Endothelial cell of umbilical vein (primary cell): ENCODE measurements at regions of chr9 and their contacts with region 1.

Region 1: DNA sequence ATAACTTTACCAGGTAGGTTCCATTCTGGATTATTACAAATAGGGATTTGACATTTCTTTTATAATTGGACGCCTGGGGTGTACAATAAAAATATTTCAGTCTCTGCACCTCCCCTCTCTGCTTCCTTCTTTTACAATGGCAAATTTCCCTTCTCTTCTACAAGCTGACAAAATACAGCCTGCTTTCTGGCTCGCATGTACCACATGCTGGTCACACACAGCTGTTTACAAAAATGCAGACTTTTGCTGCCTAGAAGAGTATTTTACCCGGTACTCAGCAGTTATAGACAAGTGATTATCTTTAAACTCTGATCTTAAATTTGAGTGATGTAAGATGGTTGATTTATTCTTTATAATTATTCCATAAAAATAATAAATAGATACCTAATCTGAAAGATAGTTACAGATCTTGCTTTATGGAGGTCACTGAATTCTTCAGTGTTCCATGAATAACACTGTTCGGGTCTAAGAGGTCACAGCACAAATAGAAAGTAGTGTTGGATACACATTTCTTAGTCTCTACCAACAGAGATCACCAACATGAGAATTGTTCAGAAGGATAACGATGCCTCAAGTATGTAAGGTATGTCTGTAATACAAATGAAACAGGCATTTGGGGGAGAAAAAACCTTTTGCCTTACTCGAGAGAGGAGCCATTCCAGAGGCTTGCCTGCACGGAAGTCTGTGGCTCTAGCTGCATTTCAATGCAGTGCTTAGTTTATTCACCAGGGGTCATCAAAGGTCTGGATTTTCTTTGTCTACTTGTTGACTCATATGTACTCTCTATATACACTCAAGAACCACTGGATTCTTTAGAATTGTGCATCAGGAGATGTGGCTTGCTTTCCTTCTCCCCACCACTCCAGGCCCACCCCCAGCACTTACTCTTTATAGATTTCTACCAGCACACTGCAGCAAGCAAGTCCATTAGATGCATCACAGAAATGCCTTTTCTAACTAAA is 206.6 kb upstream of the RFX3 start:
- DNase-seq: peak; percentile 88
- H3K4me3 ChIP-seq: no peak overlapping the region
- H3K27ac ChIP-seq: no peak overlapping the region
- H3K4me1 ChIP-seq: no peaks in the 10 kb centered on the region
- H3K27me3 ChIP-seq: peaks cover 0 to 2% of the 10 kb centered on the region in 2 experiments
- CTCF ChIP-seq: peak; percentile 58 to 66
- POLR2A ChIP-seq: no peak

Region 2: DNA sequence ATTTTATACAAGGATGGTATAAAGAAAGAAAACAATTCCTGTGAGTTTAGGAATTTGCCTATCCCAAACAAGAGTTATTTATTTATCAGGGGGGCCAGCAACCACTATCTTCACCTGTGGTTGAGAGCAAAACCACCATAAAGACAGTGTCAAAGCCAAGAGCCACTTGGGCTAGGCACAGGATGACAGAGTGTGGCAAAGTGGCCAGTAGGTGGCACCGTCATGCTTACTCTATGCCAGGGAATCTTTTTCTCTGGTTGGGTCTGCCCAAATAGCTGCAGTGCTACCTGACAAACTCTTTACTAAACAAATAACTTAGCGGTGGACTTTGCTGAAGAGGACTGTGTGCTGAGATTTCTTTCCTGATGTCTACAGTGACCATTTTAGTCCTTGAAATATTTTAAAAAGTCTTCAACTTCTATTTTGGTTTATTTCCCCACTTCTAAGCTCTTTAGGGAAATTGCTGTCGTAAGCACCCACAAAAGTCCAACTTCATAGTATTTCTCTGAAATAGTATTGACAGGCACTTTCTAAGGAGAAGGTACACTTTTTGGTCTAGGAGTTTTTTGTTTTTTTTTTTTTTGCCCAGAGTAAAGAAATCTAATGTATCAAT is 491.6 kb before region 1 on chr9:
- CTCF ChIA-PET with region 1: interaction called, 6 read pairs
- POLR2A ChIA-PET with region 1: no interaction called
- dilution Hi-C with region 1: no loop called
- intact Hi-C with region 1: loop called (anchors 2 kb)
- DNase-seq: peak; percentile 67
- H3K4me3 ChIP-seq: no peak overlapping the region
- H3K27ac ChIP-seq: no peak overlapping the region
- H3K4me1 ChIP-seq: no peaks in the 10 kb centered on the region
- H3K27me3 ChIP-seq: no peaks in the 10 kb centered on the region
- CTCF ChIP-seq: peak; percentile 77 to 88
- POLR2A ChIP-seq: no peak

Region 3: GRCh38 chr9:3992924-3993323 is 260.6 kb after region 1 on chr9:
- CTCF ChIA-PET with region 1: no interaction called
- POLR2A ChIA-PET with region 1: no interaction called
- dilution Hi-C with region 1: no loop called
- intact Hi-C with region 1: loop called (anchors 2 kb)
- DNase-seq: peak; percentile 69
- H3K4me3 ChIP-seq: no peak overlapping the region
- H3K27ac ChIP-seq: no peak overlapping the region
- H3K4me1 ChIP-seq: peaks cover 4% of the 10 kb centered on the region
- H3K27me3 ChIP-seq: no peaks in the 10 kb centered on the region
- CTCF ChIP-seq: no peak
- POLR2A ChIP-seq: no peak

Region 4: DNA sequence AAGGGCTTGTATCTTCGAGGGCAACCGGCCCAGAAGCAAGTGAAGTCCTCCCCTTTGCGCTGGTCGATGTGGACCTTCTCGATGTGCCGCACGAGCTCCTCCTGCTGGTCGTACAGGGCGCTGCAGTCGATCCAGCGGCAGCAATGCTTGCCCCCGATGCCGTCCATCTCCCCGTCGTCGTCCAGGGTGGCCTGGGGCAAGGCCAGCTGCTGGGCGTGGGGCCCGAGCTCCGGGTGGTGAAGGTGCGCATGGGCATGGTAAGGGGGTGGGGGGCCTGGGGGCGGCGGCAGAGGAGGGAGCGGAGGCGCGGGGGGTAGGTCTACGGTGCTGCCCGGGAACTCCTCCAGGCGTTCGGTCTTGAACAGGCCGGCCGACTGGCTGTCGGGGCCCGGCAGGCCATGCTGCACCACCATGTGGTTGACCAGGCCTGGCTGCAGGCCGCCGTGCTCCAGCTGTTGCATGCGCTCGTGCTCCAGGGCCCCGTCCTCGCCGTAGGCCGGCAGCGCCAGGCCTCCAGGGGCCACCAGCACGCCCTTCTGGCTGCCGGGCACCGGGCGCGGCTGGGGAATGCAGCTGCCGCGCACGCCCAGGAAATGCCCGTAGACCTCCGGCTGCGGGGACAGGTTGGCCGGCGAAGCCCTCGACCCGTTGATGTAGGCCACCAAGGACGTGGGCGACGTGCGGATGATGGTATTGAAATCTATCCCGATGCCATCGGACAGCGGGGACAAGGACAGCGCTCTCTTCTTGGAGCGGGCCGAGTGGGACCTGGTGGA is 385.7 kb after region 1 on chr9:
- CTCF ChIA-PET with region 1: interaction called, 10 read pairs
- POLR2A ChIA-PET with region 1: no interaction called
- dilution Hi-C with region 1: no loop called
- intact Hi-C with region 1: loop called (anchors 1 kb)
- DNase-seq: no peak
- H3K4me3 ChIP-seq: no peak overlapping the region
- H3K27ac ChIP-seq: no peak overlapping the region
- H3K4me1 ChIP-seq: no peaks in the 10 kb centered on the region
- H3K27me3 ChIP-seq: no peaks in the 10 kb centered on the region
- CTCF ChIP-seq: peak; percentile 54 to 57
- POLR2A ChIP-seq: no peak

Region 5: DNA sequence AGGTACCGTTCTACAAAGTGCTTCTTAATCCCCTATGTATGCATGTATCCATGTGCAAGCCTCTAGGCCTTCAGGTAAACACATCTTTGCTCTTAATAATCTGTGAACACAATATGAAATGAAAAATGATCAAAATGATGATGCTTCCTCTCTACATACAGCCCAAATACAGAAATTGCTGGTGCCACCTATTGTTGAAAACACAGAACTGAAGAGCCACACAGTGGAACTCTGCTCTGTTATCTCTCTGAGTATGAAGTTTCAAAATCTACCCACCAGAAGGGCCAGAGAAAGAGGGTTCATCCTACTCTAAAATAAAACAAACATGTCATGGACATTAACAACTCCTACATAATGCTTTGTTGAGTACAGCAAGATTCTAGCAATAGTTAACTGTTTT is 496.2 kb after region 1 on chr9:
- CTCF ChIA-PET with region 1: interaction called, 45 read pairs
- POLR2A ChIA-PET with region 1: no interaction called
- dilution Hi-C with region 1: no loop called
- intact Hi-C with region 1: loop called (anchors 1 kb)
- DNase-seq: peak; percentile 25
- H3K4me3 ChIP-seq: no peak overlapping the region
- H3K27ac ChIP-seq: no peak overlapping the region
- H3K4me1 ChIP-seq: no peaks in the 10 kb centered on the region
- H3K27me3 ChIP-seq: peaks cover 0 to 2% of the 10 kb centered on the region in 2 experiments
- CTCF ChIP-seq: peak; percentile 11 to 42
- POLR2A ChIP-seq: no peak

Region 6: GRCh38 chr9:4339357-4339756 is 607.0 kb after region 1 on chr9:
- CTCF ChIA-PET with region 1: interaction called, 24 read pairs
- POLR2A ChIA-PET with region 1: no interaction called
- dilution Hi-C with region 1: no loop called
- intact Hi-C with region 1: loop called (anchors 1 kb)
- DNase-seq: peak; percentile 86
- H3K4me3 ChIP-seq: no peak overlapping the region
- H3K27ac ChIP-seq: no peak overlapping the region
- H3K4me1 ChIP-seq: peaks cover 6% of the 10 kb centered on the region
- H3K27me3 ChIP-seq: no peaks in the 10 kb centered on the region
- CTCF ChIP-seq: peak; percentile 85 to 97
- POLR2A ChIP-seq: no peak

Region 7: DNA sequence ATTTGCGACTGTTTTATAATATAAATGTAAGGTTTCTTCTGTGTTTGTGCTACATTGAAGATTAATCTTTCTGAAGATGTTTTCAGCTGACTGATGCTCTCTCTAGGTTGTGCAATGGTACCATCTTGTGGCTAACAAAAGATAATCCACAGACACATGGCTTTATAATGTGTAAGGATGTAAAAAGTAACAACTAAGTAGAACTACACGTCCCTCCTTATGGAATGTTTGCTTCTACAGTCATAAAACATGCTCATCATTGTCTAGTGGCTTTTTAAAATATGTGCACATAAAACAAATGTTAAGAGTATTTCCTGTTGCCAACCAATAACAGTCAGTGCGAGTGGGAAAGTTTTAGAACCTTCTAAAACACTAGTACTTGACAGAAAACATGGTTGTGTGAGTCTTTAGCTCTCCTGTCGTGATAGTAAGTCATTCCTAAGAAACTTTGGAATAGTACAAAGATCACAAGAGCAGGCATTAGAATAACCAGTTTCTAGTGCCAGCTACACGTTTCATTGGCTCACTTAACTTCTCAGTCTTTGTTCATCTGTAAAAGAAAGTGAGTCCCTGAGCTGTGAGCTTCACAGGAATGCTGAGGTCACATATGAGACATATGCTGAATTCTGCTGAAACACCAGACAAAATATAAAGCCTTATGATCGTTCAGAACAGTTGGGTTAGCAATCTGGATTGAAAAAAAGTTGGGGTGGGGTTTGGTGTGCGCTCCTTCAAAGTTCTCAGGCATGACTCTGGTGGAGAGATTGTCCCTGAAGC is 643.3 kb after region 1 on chr9:
- CTCF ChIA-PET with region 1: interaction called, 26 read pairs
- POLR2A ChIA-PET with region 1: no interaction called
- dilution Hi-C with region 1: no loop called
- intact Hi-C with region 1: loop called (anchors 1 kb)
- DNase-seq: peak; percentile 47
- H3K4me3 ChIP-seq: no peak overlapping the region
- H3K27ac ChIP-seq: no peak overlapping the region
- H3K4me1 ChIP-seq: no peaks in the 10 kb centered on the region
- H3K27me3 ChIP-seq: peaks cover 4 to 10% of the 10 kb centered on the region in 2 experiments
- CTCF ChIP-seq: peak; percentile 18 to 23
- POLR2A ChIP-seq: no peak